MCF 10A (cell line): ENCODE measurements at regions of chr4 and their contacts with region 1.

Region 1: DNA sequence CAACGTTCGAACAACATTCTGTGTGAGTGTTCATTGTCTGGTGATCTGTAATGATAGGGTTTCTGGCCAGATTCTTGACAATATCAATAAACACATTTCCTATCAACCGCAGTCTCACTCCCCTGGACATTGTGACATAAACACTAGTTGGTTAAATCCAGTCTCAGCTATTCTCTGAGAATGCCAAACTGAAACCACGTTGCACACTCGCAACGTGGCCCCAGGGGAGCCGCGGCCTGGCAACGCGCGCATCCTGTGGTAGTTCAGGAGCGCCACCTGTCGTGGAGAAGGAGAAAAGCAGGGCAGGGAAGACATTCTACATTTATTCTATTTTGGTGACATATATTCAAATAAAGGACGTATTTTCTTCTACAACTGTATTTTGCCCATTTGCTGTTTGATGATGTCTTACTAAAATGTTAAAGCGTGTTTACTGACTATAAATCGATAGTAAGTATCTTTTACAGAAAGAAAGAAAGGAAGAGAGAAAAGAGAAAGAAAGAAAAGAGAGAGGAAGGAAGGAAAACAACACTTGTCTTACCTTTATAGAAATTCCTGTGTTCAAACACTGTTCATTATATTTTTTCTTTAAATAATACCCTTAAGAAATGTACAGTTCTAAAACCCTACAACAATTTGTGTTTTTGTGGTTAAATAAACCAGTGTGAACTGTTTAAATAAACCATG is 738.3 kb upstream of the FRG1 start:
- DNase-seq: peak; percentile 77
- H3K4me3 Mint-ChIP-seq: peak overlapping the region; percentile 64
- H3K27ac Mint-ChIP-seq: peak overlapping the region; percentile 47
- H3K4me1 Mint-ChIP-seq: peaks cover 17% of the 10 kb centered on the region
- H3K27me3 Mint-ChIP-seq: no peaks in the 10 kb centered on the region
- CTCF ChIP-seq: peak; percentile 94

Region 2: GRCh38 chr4:187606581-187606980 is 1595.7 kb before region 1 on chr4:
- CTCF ChIA-PET with region 1: interaction called, 6 read pairs
- POLR2A ChIA-PET with region 1: no interaction called
- intact Hi-C with region 1: loop called (anchors 1 kb)
- DNase-seq: peak; percentile 71
- H3K4me3 Mint-ChIP-seq: no peak overlapping the region
- H3K27ac Mint-ChIP-seq: no peak overlapping the region
- H3K4me1 Mint-ChIP-seq: peaks cover 25% of the 10 kb centered on the region
- H3K27me3 Mint-ChIP-seq: no peaks in the 10 kb centered on the region
- CTCF ChIP-seq: peak; percentile 90

Region 3: GRCh38 chr4:188781655-188782054 is 420.7 kb before region 1 on chr4:
- CTCF ChIA-PET with region 1: no interaction called
- POLR2A ChIA-PET with region 1: no interaction called
- intact Hi-C with region 1: loop called (anchors 5 kb)
- DNase-seq: peak; percentile 51
- H3K4me3 Mint-ChIP-seq: no peak overlapping the region
- H3K27ac Mint-ChIP-seq: no peak overlapping the region
- H3K4me1 Mint-ChIP-seq: no peaks in the 10 kb centered on the region
- H3K27me3 Mint-ChIP-seq: no peaks in the 10 kb centered on the region
- CTCF ChIP-seq: peak; percentile 24

Region 4: GRCh38 chr4:188971125-188971524 is 231.2 kb before region 1 on chr4:
- CTCF ChIA-PET with region 1: interaction called, 12 read pairs
- POLR2A ChIA-PET with region 1: no interaction called
- intact Hi-C with region 1: loop called (anchors 1 kb)
- DNase-seq: peak; percentile 57
- H3K4me3 Mint-ChIP-seq: no peak overlapping the region
- H3K27ac Mint-ChIP-seq: no peak overlapping the region
- H3K4me1 Mint-ChIP-seq: no peaks in the 10 kb centered on the region
- H3K27me3 Mint-ChIP-seq: no peaks in the 10 kb centered on the region
- CTCF ChIP-seq: peak; percentile 36

Region 5: GRCh38 chr4:189090174-189090814 is 112.0 kb before region 1 on chr4:
- CTCF ChIA-PET with region 1: interaction called, 3 read pairs
- POLR2A ChIA-PET with region 1: no interaction called
- intact Hi-C with region 1: loop called (anchors 5 kb)
- DNase-seq: peak; percentile 50
- H3K4me3 Mint-ChIP-seq: no peak overlapping the region
- H3K27ac Mint-ChIP-seq: no peak overlapping the region
- H3K4me1 Mint-ChIP-seq: peaks cover 9% of the 10 kb centered on the region
- H3K27me3 Mint-ChIP-seq: no peaks in the 10 kb centered on the region
- CTCF ChIP-seq: peak; percentile 51

Region 6: DNA sequence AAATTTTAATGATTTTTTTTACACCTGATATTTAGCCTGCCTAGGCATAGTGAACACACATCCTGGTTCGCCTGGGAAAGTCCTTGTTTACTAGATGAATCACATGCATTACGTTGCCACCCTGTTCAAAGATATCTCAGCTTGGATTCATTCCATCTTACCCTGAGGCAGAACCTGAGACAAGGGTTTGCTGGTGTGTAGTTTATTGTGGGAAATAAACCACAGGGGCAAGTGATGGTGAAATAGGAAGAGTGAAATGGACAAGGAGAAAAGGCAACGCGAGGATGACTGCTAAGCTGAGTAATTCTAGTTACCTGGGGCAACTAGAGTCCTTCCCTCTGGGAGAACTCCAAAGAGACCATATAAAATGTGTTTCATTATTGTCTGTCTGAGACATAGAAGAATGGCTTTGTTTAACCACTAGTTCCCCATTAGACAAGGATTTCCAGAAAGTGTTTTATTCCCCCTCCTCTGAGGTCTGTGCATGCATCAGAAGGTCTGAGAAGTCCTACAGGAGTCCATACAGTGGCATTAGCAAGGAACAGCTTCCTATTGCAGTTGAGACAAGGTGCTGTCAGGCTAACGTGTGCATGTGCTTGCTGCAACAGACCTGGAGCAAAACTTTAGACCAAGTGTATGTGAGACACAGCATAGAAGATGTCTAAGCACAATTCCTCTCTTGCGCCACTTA is 58.9 kb before region 1 on chr4:
- CTCF ChIA-PET with region 1: interaction called, 3 read pairs
- POLR2A ChIA-PET with region 1: no interaction called
- intact Hi-C with region 1: loop called (anchors 5 kb)
- DNase-seq: peak; percentile 100
- H3K4me3 Mint-ChIP-seq: no peak overlapping the region
- H3K27ac Mint-ChIP-seq: peak overlapping the region; percentile 71
- H3K4me1 Mint-ChIP-seq: peaks cover 8% of the 10 kb centered on the region
- H3K27me3 Mint-ChIP-seq: no peaks in the 10 kb centered on the region
- CTCF ChIP-seq: no peak

Region 7: DNA sequence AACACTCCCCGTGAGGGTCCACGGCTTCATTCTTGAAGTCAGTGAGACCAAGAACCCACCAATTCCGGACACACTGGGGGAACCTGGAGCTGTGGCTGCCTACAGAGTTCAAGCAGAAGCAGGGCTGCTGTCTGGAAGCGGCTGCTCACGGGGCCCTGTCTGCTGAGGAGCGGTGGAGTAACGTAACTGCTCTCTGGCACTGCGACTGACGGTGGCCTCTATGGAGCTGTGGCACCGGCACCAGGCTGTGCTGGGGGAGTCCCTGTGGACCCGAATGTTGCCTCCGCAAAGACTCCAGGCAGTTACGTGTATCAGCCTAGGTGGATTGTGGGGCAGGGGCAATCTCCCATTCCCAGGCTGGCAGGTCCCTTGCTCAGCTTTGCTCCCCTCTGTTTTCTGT is 35.0 kb after region 1 on chr4:
- CTCF ChIA-PET with region 1: no interaction called
- POLR2A ChIA-PET with region 1: no interaction called
- intact Hi-C with region 1: no loop called
- DNase-seq: no peak
- H3K4me3 Mint-ChIP-seq: no peak overlapping the region
- H3K27ac Mint-ChIP-seq: no peak overlapping the region
- H3K4me1 Mint-ChIP-seq: peaks cover 2% of the 10 kb centered on the region
- H3K27me3 Mint-ChIP-seq: no peaks in the 10 kb centered on the region
- CTCF ChIP-seq: no peak

Region 8: GRCh38 chr4:189792924-189793618 is 590.7 kb after region 1 on chr4:
- CTCF ChIA-PET with region 1: interaction called, 7 read pairs
- POLR2A ChIA-PET with region 1: no interaction called
- intact Hi-C with region 1: loop called (anchors 1 kb)
- DNase-seq: peak; percentile 57
- H3K4me3 Mint-ChIP-seq: peak overlapping the region; percentile 45
- H3K27ac Mint-ChIP-seq: no peak overlapping the region
- H3K4me1 Mint-ChIP-seq: peaks cover 10% of the 10 kb centered on the region
- H3K27me3 Mint-ChIP-seq: no peaks in the 10 kb centered on the region
- CTCF ChIP-seq: peak; percentile 93